ENCODE measurements at regions of chr10 and their contacts with region 1.

Region 1: DNA sequence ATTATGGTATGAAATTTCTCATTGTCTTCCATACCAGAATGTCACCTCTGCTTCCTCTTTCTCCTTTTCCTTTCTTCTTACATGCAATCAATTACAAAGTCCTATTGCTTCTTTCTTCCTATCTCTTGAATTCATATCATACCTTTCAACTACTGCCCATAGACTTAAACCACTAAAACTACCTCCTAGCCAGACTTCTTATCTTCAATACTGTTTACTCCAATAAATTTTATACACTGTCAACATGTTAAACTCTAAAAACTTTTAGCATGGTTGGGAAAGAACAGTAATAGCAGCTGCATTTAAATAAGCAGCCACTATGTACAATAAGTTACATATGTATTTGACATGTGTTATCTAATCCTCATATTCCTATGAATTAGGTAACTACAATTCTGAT is 34.9 kb downstream of the PCGF6 start:
- H3K4me3 ChIP-seq: no peak overlapping the region
- H3K27ac ChIP-seq: no peak overlapping the region
- H3K4me1 ChIP-seq: no peaks in the 10 kb centered on the region
- CTCF ChIP-seq: no peak

Region 2: DNA sequence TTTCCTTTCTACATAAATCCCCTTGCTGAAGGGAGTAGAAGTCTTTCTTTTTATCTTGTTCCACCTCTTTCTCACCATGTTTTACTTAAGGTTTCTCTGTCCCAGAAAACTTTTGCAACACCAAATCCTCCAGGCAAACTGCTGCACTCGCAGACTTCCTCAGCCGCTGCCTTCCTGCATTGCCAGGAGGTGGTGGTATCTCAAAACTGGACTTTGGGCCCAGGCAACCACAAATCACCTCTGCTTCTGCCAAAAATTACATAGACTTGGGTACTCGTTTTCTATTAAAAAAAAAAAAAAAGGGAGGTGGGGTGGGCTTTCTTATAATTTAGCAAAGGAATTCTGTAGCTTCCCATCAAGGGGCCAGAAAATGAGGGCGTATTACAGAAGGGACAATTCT is 24.5 kb before region 1 on chr10:
- CTCF ChIA-PET with region 1: no interaction called
- POLR2A ChIA-PET with region 1: no interaction called
- H3K4me3 ChIP-seq: no peak overlapping the region
- H3K27ac ChIP-seq: no peak overlapping the region
- H3K4me1 ChIP-seq: no peaks in the 10 kb centered on the region
- CTCF ChIP-seq: no peak

Region 3: GRCh38 chr10:103333925-103334520 is 17.9 kb after region 1 on chr10:
- CTCF ChIA-PET with region 1: interaction called, 18 read pairs
- POLR2A ChIA-PET with region 1: no interaction called
- H3K4me3 ChIP-seq: no peak overlapping the region
- H3K27ac ChIP-seq: no peak overlapping the region
- H3K4me1 ChIP-seq: no peaks in the 10 kb centered on the region
- CTCF ChIP-seq: no peak

Measured in HEK293 (cell line).